PC-9 (cell line): ENCODE measurements at regions of chr3 and their contacts with region 1.

Region 1: GRCh38 chr3:58013973-58014649 is 5.9 kb downstream of the FLNB start:
- DNase-seq: no peak
- H3K4me3 ChIP-seq: no peak overlapping the region
- H3K27ac ChIP-seq: no peak overlapping the region
- H3K4me1 ChIP-seq: peaks cover 69% of the 10 kb centered on the region
- H3K27me3 ChIP-seq: no peaks in the 10 kb centered on the region
- CTCF ChIP-seq: no peak

Region 2: GRCh38 chr3:57793737-57794187 is 220.3 kb before region 1 on chr3:
- CTCF ChIA-PET with region 1: no interaction called
- POLR2A ChIA-PET with region 1: no interaction called
- intact Hi-C with region 1: no loop called
- DNase-seq: no peak
- H3K4me3 ChIP-seq: no peak overlapping the region
- H3K27ac ChIP-seq: peak overlapping the region; percentile 67
- H3K4me1 ChIP-seq: peaks cover 38% of the 10 kb centered on the region
- H3K27me3 ChIP-seq: no peaks in the 10 kb centered on the region
- CTCF ChIP-seq: no peak

Region 3: DNA sequence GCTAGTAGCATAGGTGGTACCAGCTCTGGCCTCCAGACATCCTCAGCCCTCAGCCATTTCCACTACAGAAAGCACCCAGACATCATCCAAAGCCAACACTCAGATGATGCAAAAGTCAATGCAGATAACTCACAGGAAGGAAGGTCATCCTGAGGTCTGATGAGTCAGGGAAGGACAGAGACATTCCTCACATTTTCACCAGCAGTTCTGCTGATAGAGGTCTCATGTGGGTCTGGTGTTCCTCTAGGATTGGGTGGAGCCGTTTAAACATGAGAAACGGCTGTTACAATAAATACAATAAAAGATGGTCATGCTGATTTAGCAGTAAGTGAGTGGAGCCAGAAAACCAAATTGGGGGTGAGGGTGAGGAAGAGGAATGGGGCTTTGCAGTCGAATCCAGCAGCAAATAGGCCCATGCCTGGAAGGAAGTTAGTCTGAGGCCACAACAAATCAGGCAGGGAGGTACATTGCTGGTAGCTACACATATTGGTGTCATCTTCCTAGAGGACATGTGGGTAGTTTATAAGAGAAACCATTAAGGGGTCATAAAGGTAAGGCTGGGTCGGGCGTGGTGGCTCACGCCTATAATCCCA is 39.2 kb before region 1 on chr3:
- CTCF ChIA-PET with region 1: no interaction called
- POLR2A ChIA-PET with region 1: interaction called, 18 read pairs
- intact Hi-C with region 1: loop called (anchors 1 kb)
- DNase-seq: peak; percentile 63 to 91
- H3K4me3 ChIP-seq: no peak overlapping the region
- H3K27ac ChIP-seq: peak overlapping the region; percentile 100
- H3K4me1 ChIP-seq: peaks cover 98% of the 10 kb centered on the region
- H3K27me3 ChIP-seq: no peaks in the 10 kb centered on the region
- CTCF ChIP-seq: no peak

Region 4: GRCh38 chr3:58111513-58112186 is 97.5 kb after region 1 on chr3:
- CTCF ChIA-PET with region 1: no interaction called
- POLR2A ChIA-PET with region 1: no interaction called
- intact Hi-C with region 1: loop called (anchors 5 kb)
- DNase-seq: peak; percentile 79 to 84
- H3K4me3 ChIP-seq: no peak overlapping the region
- H3K27ac ChIP-seq: peak overlapping the region; percentile 68
- H3K4me1 ChIP-seq: peaks cover 20% of the 10 kb centered on the region
- H3K27me3 ChIP-seq: no peaks in the 10 kb centered on the region
- CTCF ChIP-seq: no peak

Region 5: DNA sequence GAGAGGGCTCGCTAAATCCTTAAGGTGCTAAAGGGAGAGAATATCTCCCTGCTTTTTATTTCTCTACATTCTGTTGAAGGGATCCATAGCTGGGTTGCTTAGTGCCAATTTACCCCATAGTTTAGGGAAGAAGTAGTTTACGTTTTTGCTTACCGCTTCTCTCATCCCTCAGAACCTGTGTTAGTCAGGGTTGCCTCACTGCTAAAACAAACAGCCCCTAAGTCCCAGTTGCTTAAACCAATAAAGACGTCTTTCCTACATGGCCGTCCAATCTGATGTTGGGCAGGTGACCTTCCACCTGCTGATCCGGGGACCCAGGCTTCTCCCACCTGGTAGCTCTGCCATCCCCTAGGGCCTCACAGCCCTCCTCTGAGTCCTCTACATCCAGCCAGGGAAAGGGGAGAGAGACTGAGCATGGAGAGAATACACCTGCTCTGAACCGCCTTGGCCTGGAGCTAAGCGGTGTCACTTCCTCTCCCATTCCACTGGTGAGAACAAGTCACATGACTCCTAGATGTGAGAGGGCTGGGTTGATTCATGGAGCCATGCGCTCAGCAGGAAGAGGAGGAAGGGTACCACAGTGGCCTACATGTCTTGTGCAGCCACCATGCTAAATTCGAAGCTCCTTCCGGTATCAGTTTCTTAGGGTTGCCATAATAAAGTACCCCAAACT is 170.3 kb after region 1 on chr3:
- CTCF ChIA-PET with region 1: no interaction called
- POLR2A ChIA-PET with region 1: no interaction called
- intact Hi-C with region 1: no loop called
- DNase-seq: no peak
- H3K4me3 ChIP-seq: no peak overlapping the region
- H3K27ac ChIP-seq: no peak overlapping the region
- H3K4me1 ChIP-seq: peaks cover 28% of the 10 kb centered on the region
- H3K27me3 ChIP-seq: no peaks in the 10 kb centered on the region
- CTCF ChIP-seq: no peak